Activated CD4-positive, alpha-beta T cell treated with anti-CD3 and anti-CD28 coated beads for 36 hours (primary cell): ENCODE measurements at regions of chr5 and their contacts with region 1.

Region 1: DNA sequence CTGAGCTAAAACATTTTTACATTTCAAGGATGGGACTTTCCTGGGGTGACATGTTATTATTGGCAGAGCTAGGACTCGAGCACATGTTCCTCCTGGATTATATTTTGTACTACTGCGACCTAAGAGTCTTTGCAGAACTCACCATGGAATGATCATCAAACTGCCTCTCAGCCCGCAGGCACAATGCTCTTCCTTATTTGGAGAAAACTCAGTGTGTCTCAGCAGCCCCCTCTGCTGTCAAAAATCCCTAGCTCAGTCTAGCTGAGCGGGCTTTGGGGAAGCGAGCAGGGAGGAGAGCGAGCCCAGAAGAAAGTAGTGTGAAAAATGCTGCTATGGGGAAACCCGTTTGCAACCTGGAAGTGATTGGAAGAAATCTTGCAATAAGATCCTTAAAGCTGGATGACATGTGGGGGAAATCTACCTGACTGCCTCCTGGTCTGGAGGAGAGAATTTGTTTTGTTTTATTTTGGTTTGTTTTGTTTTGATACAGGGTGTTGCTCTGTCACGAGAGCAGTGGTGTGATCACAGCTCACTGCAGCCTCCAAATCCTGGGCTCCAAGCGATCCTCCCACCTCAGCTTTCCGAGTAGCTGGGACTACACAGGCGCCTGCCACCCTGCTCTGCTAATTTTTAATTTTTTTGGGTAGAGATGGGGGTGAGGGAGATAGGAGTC is 89.9 kb upstream of the CLINT1 start:
- DNase-seq: peak; percentile 88
- ATAC-seq: peak; percentile 97
- H3K4me3 Mint-ChIP-seq: no peak overlapping the region
- H3K27ac Mint-ChIP-seq: no peak overlapping the region
- H3K4me1 Mint-ChIP-seq: peaks cover 3% of the 10 kb centered on the region
- H3K27me3 Mint-ChIP-seq: peaks cover 9% of the 10 kb centered on the region

Region 2: DNA sequence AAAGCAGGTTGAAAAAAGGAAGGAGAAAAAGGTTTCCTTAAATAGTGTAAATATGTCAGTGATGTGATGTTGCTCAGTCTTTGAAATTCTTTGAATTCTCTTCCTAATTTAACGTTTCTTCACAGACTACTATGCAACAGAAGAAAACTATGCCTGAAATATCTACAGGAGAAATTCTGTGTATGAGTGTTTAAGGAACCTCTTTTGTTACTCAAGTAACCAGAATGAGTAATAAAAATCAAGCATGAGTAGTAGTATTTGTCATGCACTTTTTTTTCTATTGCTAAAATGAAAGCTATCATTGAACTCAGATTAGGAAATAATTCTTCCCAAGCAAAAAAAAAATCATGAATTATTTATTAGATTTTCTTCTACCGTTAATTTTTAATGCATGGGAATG is 238.0 kb before region 1 on chr5:
- CTCF ChIA-PET with region 1: no interaction called
- POLR2A ChIA-PET with region 1: no interaction called
- intact Hi-C with region 1: no loop called
- DNase-seq: no peak
- ATAC-seq: peak; percentile 82
- H3K4me3 Mint-ChIP-seq: no peak overlapping the region
- H3K27ac Mint-ChIP-seq: no peak overlapping the region
- H3K4me1 Mint-ChIP-seq: peaks cover 20% of the 10 kb centered on the region
- H3K27me3 Mint-ChIP-seq: no peaks in the 10 kb centered on the region

Region 3: DNA sequence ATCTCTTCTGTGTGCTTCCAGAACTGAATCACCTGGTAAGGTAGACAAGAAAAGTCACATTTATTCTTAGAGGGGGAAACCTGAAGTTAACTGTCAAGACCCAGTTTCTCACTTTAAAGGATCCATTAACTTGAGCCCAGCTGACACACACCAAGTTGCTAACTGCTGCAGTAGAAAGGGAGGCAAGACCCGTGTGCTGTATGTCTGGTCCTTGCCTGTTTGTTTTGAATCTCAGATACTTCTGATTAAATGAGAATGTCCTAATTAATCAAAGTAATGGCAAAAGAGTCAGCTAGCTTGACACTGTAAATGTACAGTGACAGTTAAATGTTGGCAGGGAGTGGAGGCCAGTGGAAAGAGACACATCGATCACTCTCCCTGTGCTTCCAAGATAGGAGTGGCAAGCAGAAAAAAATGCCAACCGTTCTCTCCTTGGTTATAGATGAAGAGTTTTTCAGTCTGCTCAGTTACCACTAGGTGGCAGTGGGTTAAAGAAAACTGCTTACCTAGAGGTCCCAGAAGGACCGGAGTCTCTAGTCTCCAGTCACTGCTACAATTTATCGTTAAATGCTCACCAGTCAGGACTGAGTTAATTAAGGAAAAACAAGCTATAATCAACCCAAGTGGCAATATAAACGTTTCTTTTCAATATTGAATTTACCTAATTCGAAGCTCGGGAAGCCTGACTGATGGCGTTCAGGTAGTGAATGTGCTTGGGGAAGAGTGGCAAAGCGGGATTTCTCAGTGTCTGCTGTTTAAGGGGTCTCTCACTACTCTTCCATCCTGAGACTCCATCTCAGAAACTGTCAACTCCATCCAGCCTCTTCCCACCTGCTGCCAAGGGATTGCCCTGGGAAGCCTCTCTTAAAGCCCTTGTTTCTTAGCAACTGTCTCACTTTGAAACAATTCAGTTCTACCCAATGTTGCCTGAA is 186.9 kb before region 1 on chr5:
- CTCF ChIA-PET with region 1: interaction called, 22 read pairs
- POLR2A ChIA-PET with region 1: no interaction called
- intact Hi-C with region 1: loop called (anchors 1 to 2 kb)
- DNase-seq: peak; percentile 27
- ATAC-seq: peak; percentile 91
- H3K4me3 Mint-ChIP-seq: no peak overlapping the region
- H3K27ac Mint-ChIP-seq: no peak overlapping the region
- H3K4me1 Mint-ChIP-seq: peaks cover 7% of the 10 kb centered on the region
- H3K27me3 Mint-ChIP-seq: no peaks in the 10 kb centered on the region

Region 4: DNA sequence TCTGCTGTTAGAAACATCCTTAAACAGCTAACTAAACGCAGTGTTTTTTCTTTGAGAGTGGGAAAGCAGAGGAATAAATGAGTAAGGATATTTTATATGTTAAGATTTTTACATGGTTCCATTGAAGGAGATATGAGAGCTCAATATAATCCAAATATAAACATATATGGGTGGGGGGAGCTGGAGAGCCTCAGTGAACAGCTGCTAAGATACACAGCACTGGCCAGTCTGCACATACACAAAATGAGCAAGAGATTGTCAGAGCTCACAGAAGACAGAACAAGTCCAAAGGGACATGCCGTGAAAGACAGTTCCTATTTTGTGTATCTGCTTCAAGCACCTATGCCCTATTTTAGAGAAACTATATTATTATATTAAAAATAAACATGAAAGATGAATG is 136.8 kb before region 1 on chr5:
- CTCF ChIA-PET with region 1: interaction called, 50 read pairs
- POLR2A ChIA-PET with region 1: interaction called, 4 read pairs
- intact Hi-C with region 1: loop called (anchors 1 kb)
- DNase-seq: no peak
- ATAC-seq: no peak
- H3K4me3 Mint-ChIP-seq: no peak overlapping the region
- H3K27ac Mint-ChIP-seq: no peak overlapping the region
- H3K4me1 Mint-ChIP-seq: no peaks in the 10 kb centered on the region
- H3K27me3 Mint-ChIP-seq: no peaks in the 10 kb centered on the region

Region 5: GRCh38 chr5:157820593-157821252 is 128.2 kb before region 1 on chr5:
- CTCF ChIA-PET with region 1: interaction called, 50 read pairs
- POLR2A ChIA-PET with region 1: no interaction called
- intact Hi-C with region 1: loop called (anchors 1 kb)
- DNase-seq: peak; percentile 42
- ATAC-seq: no peak
- H3K4me3 Mint-ChIP-seq: no peak overlapping the region
- H3K27ac Mint-ChIP-seq: no peak overlapping the region
- H3K4me1 Mint-ChIP-seq: peaks cover 38% of the 10 kb centered on the region
- H3K27me3 Mint-ChIP-seq: no peaks in the 10 kb centered on the region

Region 6: GRCh38 chr5:157930710-157931109 is 18.2 kb before region 1 on chr5:
- CTCF ChIA-PET with region 1: interaction called, 16 read pairs
- POLR2A ChIA-PET with region 1: no interaction called
- intact Hi-C with region 1: no loop called
- DNase-seq: no peak
- ATAC-seq: no peak
- H3K4me3 Mint-ChIP-seq: no peak overlapping the region
- H3K27ac Mint-ChIP-seq: no peak overlapping the region
- H3K4me1 Mint-ChIP-seq: no peaks in the 10 kb centered on the region
- H3K27me3 Mint-ChIP-seq: no peaks in the 10 kb centered on the region

Region 7: GRCh38 chr5:157994906-157995519 is 46.1 kb after region 1 on chr5:
- CTCF ChIA-PET with region 1: interaction called, 21 read pairs
- POLR2A ChIA-PET with region 1: no interaction called
- intact Hi-C with region 1: no loop called
- DNase-seq: peak; percentile 70
- ATAC-seq: peak; percentile 93
- H3K4me3 Mint-ChIP-seq: peak overlapping the region; percentile 14
- H3K27ac Mint-ChIP-seq: no peak overlapping the region
- H3K4me1 Mint-ChIP-seq: peaks cover 11% of the 10 kb centered on the region
- H3K27me3 Mint-ChIP-seq: peaks cover 20% of the 10 kb centered on the region